ENCODE measurements at regions of chr11 and their contacts with region 1.

Region 1: GRCh38 chr11:105774899-105775298 is 165.0 kb downstream of the GRIA4 start:
- DNase-seq: no peak

Region 2: GRCh38 chr11:105856954-105857353 is 82.1 kb after region 1 on chr11:
- intact Hi-C with region 1: loop called (anchors 10 kb)
- DNase-seq: no peak

Region 3: DNA sequence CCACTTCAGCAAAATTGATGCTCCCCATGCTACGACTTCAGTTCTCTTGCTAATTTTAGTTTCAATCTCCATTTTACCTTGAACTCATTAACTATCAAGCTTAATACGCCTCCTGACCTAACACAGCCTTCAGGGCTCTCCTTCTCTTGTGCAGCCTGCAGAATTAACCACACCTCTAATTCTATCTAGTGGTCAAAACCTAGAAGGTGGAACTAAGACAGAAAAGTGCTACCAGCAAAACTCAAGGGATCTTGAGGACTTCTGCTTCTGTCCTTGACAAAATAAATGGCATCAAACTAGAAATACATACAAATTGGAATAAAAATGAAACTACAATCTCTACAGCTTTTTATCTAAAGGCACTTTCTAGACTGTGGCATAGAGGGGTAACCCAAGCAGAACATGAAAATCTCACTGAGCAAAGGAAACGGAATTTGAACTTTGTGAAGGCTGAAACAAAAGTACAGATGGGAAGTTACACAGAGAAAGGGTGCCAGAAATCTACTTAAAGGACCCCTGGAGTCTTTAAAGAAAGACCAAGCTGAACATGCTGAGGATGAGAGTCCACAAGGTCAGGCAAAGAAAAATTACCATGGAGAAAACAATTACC is 1672.0 kb after region 1 on chr11:
- intact Hi-C with region 1: no loop called
- DNase-seq: no peak

Measured in posterior cingulate gyrus (tissue), 11 donors.